Stomach (tissue), 19 donors: ENCODE measurements at regions of chr6 and their contacts with region 1.

Region 1: GRCh38 chr6:130322673-130323268 is 43.0 kb upstream of the TMEM200A start:
- DNase-seq: peak; percentile 47 to 86
- H3K4me3 ChIP-seq: no peak overlapping the region
- H3K27ac ChIP-seq: no peak overlapping the region
- H3K4me1 ChIP-seq: peaks cover 0 to 3% (median 0%) of the 10 kb centered on the region in 4 donors
- H3K27me3 ChIP-seq: no peaks in the 10 kb centered on the region
- CTCF ChIP-seq: peak in 5 of 7 experiments; percentile 63 to 82 (median 71)
- EP300 ChIP-seq: no peak
- POLR2A ChIP-seq: no peak

Region 2: GRCh38 chr6:130090796-130091195 is 232.0 kb before region 1 on chr6:
- intact Hi-C with region 1: no loop called
- DNase-seq: no peak
- H3K4me3 ChIP-seq: no peak overlapping the region
- H3K27ac ChIP-seq: no peak overlapping the region
- H3K4me1 ChIP-seq: no peaks in the 10 kb centered on the region
- H3K27me3 ChIP-seq: no peaks in the 10 kb centered on the region
- CTCF ChIP-seq: no peak
- EP300 ChIP-seq: no peak
- POLR2A ChIP-seq: no peak

Region 3: GRCh38 chr6:130259557-130259956 is 63.2 kb before region 1 on chr6:
- intact Hi-C with region 1: no loop called
- DNase-seq: no peak
- H3K4me3 ChIP-seq: no peak overlapping the region
- H3K27ac ChIP-seq: no peak overlapping the region
- H3K4me1 ChIP-seq: no peaks in the 10 kb centered on the region
- H3K27me3 ChIP-seq: no peaks in the 10 kb centered on the region
- CTCF ChIP-seq: no peak
- EP300 ChIP-seq: no peak
- POLR2A ChIP-seq: no peak

Region 4: GRCh38 chr6:130843575-130844320 is 521.0 kb after region 1 on chr6:
- intact Hi-C with region 1: loop called (anchors 10 kb)
- DNase-seq: peak in 1 of 2 donors; percentile 77
- H3K4me3 ChIP-seq: no peak overlapping the region
- H3K27ac ChIP-seq: no peak overlapping the region
- H3K4me1 ChIP-seq: peaks cover 0 to 5% (median 2%) of the 10 kb centered on the region in 4 donors
- H3K27me3 ChIP-seq: no peaks in the 10 kb centered on the region
- CTCF ChIP-seq: peak in 5 of 7 experiments; percentile 13 to 56 (median 41)
- EP300 ChIP-seq: no peak
- POLR2A ChIP-seq: no peak

Region 5: GRCh38 chr6:130872250-130873095 is 549.7 kb after region 1 on chr6:
- intact Hi-C with region 1: loop called (anchors 10 kb)
- DNase-seq: peak; percentile 73 to 86
- H3K4me3 ChIP-seq: no peak overlapping the region
- H3K27ac ChIP-seq: no peak overlapping the region
- H3K4me1 ChIP-seq: peaks cover 0 to 4% (median 0%) of the 10 kb centered on the region in 4 donors
- H3K27me3 ChIP-seq: no peaks in the 10 kb centered on the region
- CTCF ChIP-seq: peak in 5 of 7 experiments; percentile 42 to 82 (median 76)
- EP300 ChIP-seq: no peak
- POLR2A ChIP-seq: no peak